ENCODE measurements at regions of chr9 and their contacts with region 1.

Region 1: GRCh38 chr9:69421908-69422801 is 97.1 kb downstream of the ENTREP1 start:
- DNase-seq: no peak
- H3K4me3 ChIP-seq: no peak overlapping the region
- CTCF ChIP-seq: peak; percentile 69

Region 2: GRCh38 chr9:69232135-69232534 is 190.0 kb before region 1 on chr9:
- CTCF ChIA-PET with region 1: no interaction called
- POLR2A ChIA-PET with region 1: no interaction called
- DNase-seq: no peak
- H3K4me3 ChIP-seq: no peak overlapping the region
- CTCF ChIP-seq: no peak

Region 3: DNA sequence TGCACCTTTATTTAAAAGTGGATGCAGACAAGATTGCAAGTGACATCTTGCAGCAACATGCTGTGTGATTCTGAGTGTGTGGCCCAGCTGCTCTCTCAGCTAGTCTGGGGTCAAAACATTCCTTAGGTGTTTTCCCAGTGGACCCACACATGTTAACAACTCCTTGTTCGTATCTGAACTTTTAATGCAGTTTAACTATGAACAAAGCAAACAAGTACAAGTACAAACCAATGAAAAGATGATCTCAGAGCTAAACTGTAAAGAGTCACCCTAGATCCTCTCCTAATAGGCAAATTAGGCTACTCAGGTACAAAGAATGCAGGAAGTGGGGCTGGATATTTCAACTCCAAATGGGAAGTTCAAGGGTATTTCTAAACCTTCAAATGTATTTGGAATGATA is 11.2 kb after region 1 on chr9:
- CTCF ChIA-PET with region 1: interaction called, 19 read pairs
- POLR2A ChIA-PET with region 1: no interaction called
- DNase-seq: no peak
- H3K4me3 ChIP-seq: no peak overlapping the region
- CTCF ChIP-seq: no peak

Region 4: DNA sequence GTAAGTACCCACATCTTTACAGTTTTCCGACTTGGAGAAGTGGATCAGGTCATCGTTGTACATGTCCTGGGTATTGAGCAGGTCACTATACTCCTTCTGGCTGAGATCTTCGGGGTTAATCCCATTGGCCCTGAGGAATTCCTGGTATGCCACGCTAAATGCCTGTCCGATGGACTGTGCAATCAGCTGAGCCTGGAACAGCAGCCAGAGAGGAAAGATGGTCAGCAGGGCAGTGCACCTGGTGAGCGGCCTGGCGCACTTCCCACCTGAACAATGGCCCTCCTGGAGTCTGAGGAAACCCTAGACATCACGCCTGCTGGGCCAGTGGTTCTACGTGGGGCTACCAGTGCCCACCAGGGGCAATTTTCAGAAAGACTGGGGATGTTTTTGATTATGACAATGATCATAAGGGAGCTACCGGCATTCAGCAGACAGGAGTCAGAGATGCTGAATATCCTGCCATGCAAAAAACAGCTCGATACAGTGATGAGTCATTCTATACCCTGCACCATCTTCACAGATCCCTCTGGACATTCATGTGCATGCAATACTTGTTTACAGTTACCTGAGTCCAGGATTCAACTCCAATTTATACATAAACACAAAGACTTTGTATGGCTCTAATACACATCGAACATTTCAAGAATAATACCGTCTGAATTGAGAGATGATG is 30.1 kb after region 1 on chr9:
- CTCF ChIA-PET with region 1: interaction called, 11 read pairs
- POLR2A ChIA-PET with region 1: no interaction called
- DNase-seq: no peak
- H3K4me3 ChIP-seq: no peak overlapping the region
- CTCF ChIP-seq: no peak

Region 5: GRCh38 chr9:69542942-69543704 is 121.0 kb after region 1 on chr9:
- CTCF ChIA-PET with region 1: interaction called, 197 read pairs
- POLR2A ChIA-PET with region 1: no interaction called
- DNase-seq: no peak
- H3K4me3 ChIP-seq: no peak overlapping the region
- CTCF ChIP-seq: no peak

Region 6: GRCh38 chr9:69573651-69574050 is 151.5 kb after region 1 on chr9:
- CTCF ChIA-PET with region 1: interaction called, 10 read pairs
- POLR2A ChIA-PET with region 1: no interaction called
- DNase-seq: peak; percentile 21
- H3K4me3 ChIP-seq: no peak overlapping the region
- CTCF ChIP-seq: no peak

Region 7: GRCh38 chr9:69877854-69878514 is 455.8 kb after region 1 on chr9:
- CTCF ChIA-PET with region 1: interaction called, 14 read pairs
- POLR2A ChIA-PET with region 1: no interaction called
- DNase-seq: no peak
- H3K4me3 ChIP-seq: no peak overlapping the region
- CTCF ChIP-seq: peak; percentile 40

Region 8: DNA sequence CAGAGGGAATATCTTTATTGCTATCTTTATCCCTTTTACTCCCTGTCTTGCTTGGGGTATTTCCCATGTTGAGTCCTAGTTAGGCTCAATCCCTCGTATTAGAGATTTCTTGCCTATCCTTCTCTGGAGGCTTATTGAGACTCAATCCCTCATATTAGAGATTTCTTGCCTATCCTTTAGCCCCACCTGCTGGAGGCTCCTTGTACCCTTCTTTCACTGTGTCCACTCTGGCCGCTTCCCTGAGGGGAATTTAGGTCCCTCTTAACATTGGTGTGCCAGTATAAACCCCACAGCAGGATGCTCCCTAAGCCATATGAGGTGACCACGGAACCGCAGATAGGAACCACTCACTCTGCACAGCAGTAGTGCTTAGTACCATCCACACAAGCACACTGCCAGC is 510.7 kb after region 1 on chr9:
- CTCF ChIA-PET with region 1: interaction called, 13 read pairs
- POLR2A ChIA-PET with region 1: no interaction called
- DNase-seq: no peak
- H3K4me3 ChIP-seq: no peak overlapping the region
- CTCF ChIP-seq: no peak